A673 (cell line): ENCODE measurements at regions of chr7 and their contacts with region 1.

Region 1: GRCh38 chr7:138785587-138786437 is 12.0 kb upstream of the TMEM213 start:
- DNase-seq: no peak
- H3K4me3 ChIP-seq: no peak overlapping the region
- H3K27ac ChIP-seq: no peak overlapping the region
- H3K4me1 ChIP-seq: no peaks in the 10 kb centered on the region
- H3K27me3 ChIP-seq: peaks cover 2% of the 10 kb centered on the region
- CTCF ChIP-seq: no peak

Region 2: DNA sequence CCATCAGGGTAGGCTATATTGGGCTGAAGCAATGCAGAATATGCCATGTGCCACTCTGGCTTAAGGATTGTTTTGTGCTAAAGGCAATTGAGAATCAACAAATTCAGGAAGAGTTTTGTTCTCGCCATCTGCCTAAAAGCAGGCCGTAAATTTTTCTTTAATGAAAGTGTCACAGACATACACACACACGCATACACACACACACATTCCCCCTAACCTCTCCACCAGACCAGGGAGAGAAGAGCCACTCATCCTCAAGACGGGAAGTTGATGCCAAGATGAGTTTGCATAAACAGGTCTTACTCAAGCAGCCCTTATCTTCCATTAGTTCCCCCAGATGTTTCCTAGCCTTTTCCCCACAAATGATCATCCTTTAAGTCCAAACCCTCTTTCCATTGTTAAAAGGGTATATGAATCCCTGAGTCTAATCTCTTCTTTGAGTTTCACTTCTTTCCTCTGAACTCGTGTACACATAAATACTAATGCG is 385.4 kb before region 1 on chr7:
- CTCF ChIA-PET with region 1: no interaction called
- POLR2A ChIA-PET with region 1: no interaction called
- intact Hi-C with region 1: no loop called
- DNase-seq: no peak
- H3K4me3 ChIP-seq: no peak overlapping the region
- H3K27ac ChIP-seq: no peak overlapping the region
- H3K4me1 ChIP-seq: no peaks in the 10 kb centered on the region
- H3K27me3 ChIP-seq: no peaks in the 10 kb centered on the region
- CTCF ChIP-seq: no peak

Region 3: DNA sequence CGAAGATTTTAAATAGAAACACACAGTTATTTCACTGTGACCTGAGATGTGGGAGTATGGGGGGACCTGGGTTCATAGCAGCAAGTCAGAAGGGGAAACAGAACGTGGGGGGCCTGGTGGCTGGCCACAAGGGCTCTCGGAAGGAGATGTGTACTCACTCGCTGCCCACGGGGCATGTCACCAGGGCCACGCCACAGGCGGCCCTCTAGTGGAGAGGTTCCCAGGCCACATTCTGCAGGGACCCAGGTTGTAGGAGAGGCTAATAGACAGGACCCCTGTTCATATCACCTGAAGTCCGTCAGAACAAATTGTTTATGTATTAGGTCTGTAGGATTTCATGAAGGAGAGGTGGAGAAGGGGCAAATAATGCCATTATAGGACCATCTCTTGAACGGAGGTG is 59.5 kb before region 1 on chr7:
- CTCF ChIA-PET with region 1: no interaction called
- POLR2A ChIA-PET with region 1: interaction called, 11 read pairs
- intact Hi-C with region 1: no loop called
- DNase-seq: no peak
- H3K4me3 ChIP-seq: no peak overlapping the region
- H3K27ac ChIP-seq: no peak overlapping the region
- H3K4me1 ChIP-seq: no peaks in the 10 kb centered on the region
- H3K27me3 ChIP-seq: no peaks in the 10 kb centered on the region
- CTCF ChIP-seq: 0 out of 2 replicates have a peak, but pooled peaks have one; percentile 23

Region 4: GRCh38 chr7:139124084-139124914 is 338.5 kb after region 1 on chr7:
- CTCF ChIA-PET with region 1: no interaction called
- POLR2A ChIA-PET with region 1: no interaction called
- intact Hi-C with region 1: no loop called
- DNase-seq: peak; percentile 7
- H3K4me3 ChIP-seq: no peak overlapping the region
- H3K27ac ChIP-seq: no peak overlapping the region
- H3K4me1 ChIP-seq: peaks cover 3% of the 10 kb centered on the region
- H3K27me3 ChIP-seq: no peaks in the 10 kb centered on the region
- CTCF ChIP-seq: no peak